OCI-LY7 (cell line): ENCODE measurements at regions of chr2 and their contacts with region 1.

Region 1: DNA sequence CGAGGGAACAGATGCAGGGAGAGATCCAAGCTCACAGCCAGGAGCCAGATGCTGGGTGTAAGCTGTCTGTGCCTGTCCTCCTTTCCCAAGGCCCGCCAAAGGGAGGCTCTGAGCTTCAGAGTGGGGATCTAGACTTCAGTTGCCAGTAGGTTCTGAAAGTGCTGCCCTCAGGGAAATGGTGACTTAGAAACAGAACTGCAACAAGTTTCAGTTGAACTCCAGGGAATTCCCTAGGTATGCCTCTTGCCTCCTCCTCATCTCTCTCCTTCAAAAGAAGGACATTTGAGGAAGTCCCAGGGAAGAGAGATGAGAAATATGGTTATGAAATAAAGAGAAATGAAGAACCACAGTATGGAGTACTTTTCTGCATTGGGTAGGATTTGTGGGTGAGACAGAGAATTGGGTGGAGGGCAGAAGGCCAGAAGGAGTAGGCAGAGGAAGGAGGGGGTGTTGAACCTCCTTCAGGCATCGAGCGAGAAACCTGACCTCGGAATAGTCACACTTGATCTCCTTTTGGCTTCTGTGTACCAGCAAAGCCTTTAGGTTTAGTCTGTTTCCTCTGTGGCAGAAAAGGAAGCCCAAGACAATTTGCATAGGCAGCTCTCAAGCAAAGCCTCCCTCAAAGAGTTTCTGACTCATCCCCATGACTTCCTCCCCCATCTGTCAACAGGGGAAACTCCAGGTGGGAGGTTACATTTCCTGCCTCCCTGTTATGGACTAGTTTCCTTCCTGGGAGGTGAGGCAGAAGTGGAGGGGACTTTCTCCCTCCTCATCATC is 45.7 kb downstream of the QPCT start:
- DNase-seq: peak; percentile 93
- H3K4me3 ChIP-seq: peak overlapping the region; percentile 48
- H3K27ac ChIP-seq: peak overlapping the region; percentile 80
- H3K4me1 ChIP-seq: peaks cover 75% of the 10 kb centered on the region
- CTCF ChIP-seq: no peak

Region 2: GRCh38 chr2:37231241-37232130 is 158.7 kb before region 1 on chr2 and contains the starts of genes CEBPZ and NDUFAF7:
- CTCF ChIA-PET with region 1: no interaction called
- POLR2A ChIA-PET with region 1: no interaction called
- intact Hi-C with region 1: loop called (anchors 5 kb)
- DNase-seq: peak; percentile 91
- H3K4me3 ChIP-seq: peak within 1 kb of the TSS; percentile 92
- H3K27ac ChIP-seq: peak within 1 kb of the TSS; percentile 48
- H3K4me1 ChIP-seq: peaks cover 42% of the 10 kb centered on the region
- CTCF ChIP-seq: 0 out of 2 replicates have a peak, but pooled peaks have one; percentile 18
- total RNA-seq, gene CEBPZ: 34.9 and 50.2 TPM in 2 replicates
- total RNA-seq, gene NDUFAF7: 17.3 and 23.3 TPM in 2 replicates

Region 3: DNA sequence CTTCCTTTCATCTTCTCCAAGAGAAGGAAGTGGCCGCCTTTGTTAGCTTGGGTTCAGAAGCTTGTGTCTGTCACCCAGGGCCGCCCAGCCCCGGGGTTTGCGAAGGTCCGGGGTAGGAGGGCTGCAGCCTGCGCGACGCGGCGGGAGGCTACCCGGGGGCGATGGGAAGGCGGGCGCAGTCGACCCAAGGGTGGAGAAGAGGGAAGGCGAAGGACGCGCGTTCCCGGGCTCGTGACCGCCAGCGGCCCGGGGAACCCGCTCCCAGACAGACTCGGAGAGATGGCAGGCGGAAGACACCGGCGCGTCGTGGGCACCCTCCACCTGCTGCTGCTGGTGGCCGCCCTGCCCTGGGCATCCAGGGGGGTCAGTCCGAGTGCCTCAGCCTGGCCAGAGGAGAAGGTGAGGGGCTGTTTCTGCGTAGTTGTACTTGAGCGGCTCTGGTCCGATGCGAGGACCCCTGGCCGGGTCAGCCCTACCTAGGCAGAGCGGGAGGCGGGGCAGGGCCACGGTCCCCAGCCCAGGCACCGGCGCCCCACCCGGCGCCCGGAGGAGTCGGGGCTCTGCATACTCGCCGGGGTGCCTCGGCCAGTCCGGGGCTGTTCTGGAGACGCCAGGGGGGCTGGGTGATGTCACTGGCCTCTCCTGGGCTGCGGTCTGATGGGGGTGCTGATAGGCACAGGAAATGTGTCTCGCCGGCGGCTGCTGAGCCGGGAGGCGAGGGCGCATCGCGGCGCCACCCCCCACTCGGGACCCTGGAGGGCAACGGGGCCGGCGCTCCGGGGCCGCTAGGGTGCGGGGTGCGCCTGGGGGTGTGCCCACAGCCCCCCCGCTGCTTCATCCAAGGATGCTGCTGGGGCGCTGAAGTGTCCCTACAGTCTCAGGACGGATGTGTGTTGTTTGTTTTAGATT is 45.5 kb before region 1 on chr2 and contains the start of gene QPCT:
- CTCF ChIA-PET with region 1: no interaction called
- POLR2A ChIA-PET with region 1: interaction called, 26 read pairs
- intact Hi-C with region 1: loop called (anchors 2 kb)
- DNase-seq: peak; percentile 68
- H3K4me3 ChIP-seq: peak within 1 kb of the TSS; percentile 70
- H3K27ac ChIP-seq: peak within 1 kb of the TSS; percentile 41
- H3K4me1 ChIP-seq: peaks cover 79% of the 10 kb centered on the region
- CTCF ChIP-seq: peak; percentile 49
- total RNA-seq, gene QPCT: 3.5 and 8.2 TPM in 2 replicates

Region 4: DNA sequence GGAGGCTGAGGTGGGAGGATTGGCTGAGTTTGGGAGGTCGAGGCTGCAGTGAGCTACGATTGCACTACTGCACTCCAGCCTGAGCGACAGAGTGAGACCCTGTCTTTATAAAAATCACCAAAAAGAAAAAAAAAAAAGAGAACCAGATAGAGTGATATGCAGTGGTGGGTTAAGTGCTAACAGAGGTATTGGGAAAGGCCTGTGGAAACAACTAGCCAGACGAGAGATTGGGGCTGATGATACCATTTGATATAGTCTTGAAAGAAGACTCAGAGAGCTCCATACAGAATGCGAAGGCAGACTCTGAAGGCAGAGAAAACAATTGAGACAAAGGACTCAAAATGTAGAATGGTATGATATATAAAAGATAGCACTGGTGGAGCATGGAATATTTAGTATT is 147.1 kb after region 1 on chr2:
- CTCF ChIA-PET with region 1: no interaction called
- POLR2A ChIA-PET with region 1: no interaction called
- intact Hi-C with region 1: loop called (anchors 5 kb)
- DNase-seq: no peak
- H3K4me3 ChIP-seq: no peak overlapping the region
- H3K27ac ChIP-seq: no peak overlapping the region
- H3K4me1 ChIP-seq: no peaks in the 10 kb centered on the region
- CTCF ChIP-seq: no peak

Region 5: DNA sequence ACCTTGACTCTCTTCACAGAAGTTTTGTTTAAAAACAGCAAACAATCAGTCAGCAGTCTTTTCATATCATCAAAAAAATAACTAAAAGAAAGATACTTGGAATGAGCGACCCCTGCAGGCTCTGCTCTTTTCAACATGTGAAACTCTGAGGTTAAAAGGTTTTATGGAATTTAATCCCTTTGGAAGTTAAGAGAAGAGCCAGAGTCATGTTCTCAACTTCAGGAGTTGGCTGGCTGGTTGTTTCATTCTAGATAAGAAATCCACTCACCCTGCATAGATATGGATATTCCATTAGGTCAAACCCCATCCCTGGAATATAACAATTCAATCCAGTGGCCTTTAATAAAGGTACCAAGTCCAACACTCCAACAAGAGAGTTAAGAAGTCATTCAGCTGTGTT is 419.3 kb after region 1 on chr2:
- CTCF ChIA-PET with region 1: no interaction called
- POLR2A ChIA-PET with region 1: no interaction called
- intact Hi-C with region 1: loop called (anchors 5 kb)
- DNase-seq: no peak
- H3K4me3 ChIP-seq: no peak overlapping the region
- H3K27ac ChIP-seq: no peak overlapping the region
- H3K4me1 ChIP-seq: no peaks in the 10 kb centered on the region
- CTCF ChIP-seq: peak; percentile 74